ENCODE measurements at regions of chr1 and their contacts with region 1.

Region 1: GRCh38 chr1:22969304-22969709 is 3.4 kb downstream of the LACTBL1 start:
- DNase-seq: peak; percentile 60
- H3K4me3 ChIP-seq: no peak overlapping the region
- H3K27ac ChIP-seq: no peak overlapping the region
- H3K4me1 ChIP-seq: no peaks in the 10 kb centered on the region
- H3K27me3 ChIP-seq: no peaks in the 10 kb centered on the region
- CTCF ChIP-seq: no peak

Region 2: DNA sequence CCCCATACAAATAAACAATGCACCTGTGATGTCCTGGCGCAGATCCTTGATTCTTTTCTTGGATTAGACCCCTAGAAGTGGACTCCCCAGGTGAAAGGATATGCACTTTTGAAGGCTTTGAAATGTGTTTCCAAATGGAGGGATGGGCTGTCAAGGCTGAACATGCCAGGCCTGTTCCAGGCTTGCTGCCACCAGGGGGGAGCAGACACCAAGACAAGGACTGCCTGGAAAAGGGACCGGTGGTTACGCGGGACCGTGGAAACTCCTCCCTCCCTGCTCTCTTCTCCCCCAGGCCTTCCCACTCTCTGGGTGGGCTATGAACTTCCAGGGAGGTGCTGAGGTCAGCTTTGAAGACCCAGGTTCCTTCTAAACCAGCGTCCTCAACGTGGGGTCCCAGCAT is 303.6 kb before region 1 on chr1:
- intact Hi-C with region 1: loop called (anchors 10 kb)
- DNase-seq: no peak
- H3K4me3 ChIP-seq: no peak overlapping the region
- H3K27ac ChIP-seq: no peak overlapping the region
- H3K4me1 ChIP-seq: no peaks in the 10 kb centered on the region
- H3K27me3 ChIP-seq: no peaks in the 10 kb centered on the region
- CTCF ChIP-seq: peak; percentile 39

Region 3: GRCh38 chr1:23026573-23026972 is 57.3 kb after region 1 on chr1:
- intact Hi-C with region 1: no loop called
- DNase-seq: no peak
- H3K4me3 ChIP-seq: no peak overlapping the region
- H3K27ac ChIP-seq: no peak overlapping the region
- H3K4me1 ChIP-seq: no peaks in the 10 kb centered on the region
- H3K27me3 ChIP-seq: no peaks in the 10 kb centered on the region
- CTCF ChIP-seq: no peak

Region 4: GRCh38 chr1:23263380-23263887 is 294.1 kb after region 1 on chr1:
- intact Hi-C with region 1: no loop called
- DNase-seq: no peak
- H3K4me3 ChIP-seq: no peak overlapping the region
- H3K27ac ChIP-seq: no peak overlapping the region
- H3K4me1 ChIP-seq: no peaks in the 10 kb centered on the region
- H3K27me3 ChIP-seq: no peaks in the 10 kb centered on the region
- CTCF ChIP-seq: no peak

Measured in colonic mucosa (tissue), 4 donors.